ENCODE measurements at regions of chr14 and their contacts with region 1.

Region 1: DNA sequence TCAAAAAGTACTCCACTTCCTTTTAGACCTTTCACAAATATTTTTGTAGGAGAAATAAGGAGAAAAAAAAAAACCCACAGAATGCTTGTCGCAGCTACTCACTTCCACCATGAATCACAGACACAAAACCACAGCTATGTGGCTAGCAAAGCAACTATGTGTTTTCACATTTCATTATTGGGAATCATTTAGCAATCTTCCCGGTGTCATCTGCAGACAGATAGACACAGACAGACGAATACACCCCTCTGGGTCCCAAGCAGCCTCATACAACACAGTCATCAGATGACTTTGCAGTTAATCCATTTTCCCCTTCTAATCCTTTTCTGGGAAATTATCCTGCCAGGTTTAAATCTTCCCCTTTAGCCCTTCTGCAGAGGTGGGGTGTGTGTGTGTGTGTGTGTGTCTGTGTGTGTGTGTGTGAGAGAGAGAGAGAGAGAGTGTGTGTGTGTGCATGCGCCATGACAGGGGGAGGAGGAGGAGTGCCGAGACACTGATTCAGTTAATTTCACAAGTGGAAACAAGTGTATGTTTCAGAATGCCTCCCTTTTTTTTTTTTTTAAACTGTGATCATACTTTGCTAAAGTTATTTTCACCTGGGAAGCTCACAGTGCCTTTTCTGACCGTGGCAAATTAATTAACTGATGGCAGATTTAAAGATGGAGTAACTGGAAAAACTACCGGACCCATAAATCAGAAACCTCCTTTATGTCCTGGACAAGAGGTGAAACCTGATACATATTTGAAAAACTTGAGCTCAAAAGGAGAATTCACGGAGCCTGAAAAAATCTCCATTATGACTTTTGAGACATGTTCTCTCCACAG is 39.9 kb downstream of the LTBP2 start:
- DNase-seq: no peak
- H3K4me3 ChIP-seq: no peak overlapping the region
- H3K27ac ChIP-seq: no peak overlapping the region
- H3K4me1 ChIP-seq: peaks cover 0 to 7% (median 5%) of the 10 kb centered on the region in 4 experiments; a peak in 5 of 7 replicates
- H3K27me3 ChIP-seq: no peaks in the 10 kb centered on the region
- CTCF ChIP-seq: no peak
- EP300 ChIP-seq: no peak
- POLR2A ChIP-seq: no peak
- RAD21 ChIP-seq: no peak

Region 2: GRCh38 chr14:74380156-74380555 is 192.0 kb before region 1 on chr14:
- CTCF ChIA-PET with region 1: no interaction called
- POLR2A ChIA-PET with region 1: no interaction called
- DNase-seq: no peak
- H3K4me3 ChIP-seq: no peak overlapping the region
- H3K27ac ChIP-seq: no peak overlapping the region
- H3K4me1 ChIP-seq: no peaks in the 10 kb centered on the region
- H3K27me3 ChIP-seq: no peaks in the 10 kb centered on the region
- CTCF ChIP-seq: no peak
- EP300 ChIP-seq: no peak
- POLR2A ChIP-seq: no peak
- RAD21 ChIP-seq: no peak

Region 3: DNA sequence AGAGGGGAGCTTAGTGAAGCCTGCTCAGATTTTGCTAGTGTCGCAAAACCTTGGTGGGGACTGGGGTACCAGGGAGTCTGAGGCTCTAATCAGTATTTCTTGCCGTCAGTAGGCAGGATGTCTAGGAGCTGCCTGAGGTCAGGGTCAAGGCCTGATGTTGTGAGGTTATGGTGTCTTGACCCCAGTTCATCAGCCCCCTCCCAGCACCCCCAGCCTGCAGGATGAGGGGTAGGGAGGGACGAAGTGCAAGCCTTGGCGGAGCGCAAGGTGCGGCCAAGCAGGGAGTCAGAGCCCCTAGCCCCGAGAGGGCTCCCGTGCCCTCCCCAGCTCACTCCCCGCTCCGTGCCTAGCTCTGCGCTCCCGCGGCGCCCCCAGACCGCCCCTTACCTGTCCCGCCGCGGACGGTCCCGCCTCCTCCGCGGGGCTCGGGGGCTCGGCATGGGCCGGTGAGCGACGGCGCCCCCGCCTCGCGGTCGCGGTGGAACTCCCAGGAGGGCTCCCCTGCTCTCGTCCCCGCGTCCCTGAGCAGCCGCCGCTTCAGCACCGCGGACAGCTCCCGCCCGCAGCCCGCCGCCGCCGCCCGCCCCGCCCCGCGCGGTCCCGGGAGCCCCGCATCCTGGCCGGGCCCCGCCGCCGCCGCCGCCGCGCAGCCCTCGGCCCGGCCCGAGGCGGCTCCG is 146.4 kb before region 1 on chr14:
- CTCF ChIA-PET with region 1: no interaction called
- POLR2A ChIA-PET with region 1: no interaction called
- DNase-seq: peak in 1 of 2 experiments; percentile 94
- H3K4me3 ChIP-seq: peak overlapping the region; percentile 34 to 60 (median 51)
- H3K27ac ChIP-seq: no peak overlapping the region
- H3K4me1 ChIP-seq: peaks cover 27 to 39% (median 30%) of the 10 kb centered on the region in 4 experiments
- H3K27me3 ChIP-seq: peaks cover 0 to 12% (median 7%) of the 10 kb centered on the region in 4 experiments; a peak in 4 of 7 replicates
- CTCF ChIP-seq: no peak
- EP300 ChIP-seq: peak in 1 of 2 experiments; percentile 70; a peak in 1 of 3 replicates
- POLR2A ChIP-seq: no peak
- RAD21 ChIP-seq: no peak

Region 4: DNA sequence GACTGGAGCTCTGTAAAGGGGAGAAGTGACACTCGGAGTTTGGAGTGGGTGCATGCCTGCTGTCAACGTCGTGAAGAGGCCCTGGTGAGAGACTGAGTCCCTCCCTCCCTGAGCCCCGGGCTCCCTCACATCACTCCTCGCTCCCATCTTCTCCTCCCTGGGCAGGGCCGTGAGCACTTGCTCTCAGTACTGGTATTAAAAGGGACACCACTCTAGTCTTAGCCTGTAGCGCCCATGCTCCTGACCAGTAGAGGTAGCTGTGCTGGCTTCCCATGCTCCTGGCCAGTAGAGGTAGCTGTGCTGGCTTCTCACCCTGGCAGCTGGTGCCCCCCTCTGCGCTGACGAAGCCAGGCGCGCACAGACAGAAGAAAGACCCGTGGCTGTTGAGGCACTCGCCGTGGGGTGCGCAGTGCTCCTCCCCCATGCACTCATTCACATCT is 63.8 kb before region 1 on chr14:
- CTCF ChIA-PET with region 1: interaction called, 27 read pairs
- POLR2A ChIA-PET with region 1: no interaction called
- DNase-seq: no peak
- H3K4me3 ChIP-seq: no peak overlapping the region
- H3K27ac ChIP-seq: no peak overlapping the region
- H3K4me1 ChIP-seq: peaks cover 0 to 19% (median 11%) of the 10 kb centered on the region in 4 experiments; a peak in 5 of 7 replicates
- H3K27me3 ChIP-seq: no peaks in the 10 kb centered on the region; a peak in 1 of 7 replicates
- CTCF ChIP-seq: peak in 2 of 3 experiments; percentile 99 to 100; a peak in 3 of 4 replicates
- EP300 ChIP-seq: no peak
- POLR2A ChIP-seq: no peak
- RAD21 ChIP-seq: peak; percentile 60 to 74

Region 5: DNA sequence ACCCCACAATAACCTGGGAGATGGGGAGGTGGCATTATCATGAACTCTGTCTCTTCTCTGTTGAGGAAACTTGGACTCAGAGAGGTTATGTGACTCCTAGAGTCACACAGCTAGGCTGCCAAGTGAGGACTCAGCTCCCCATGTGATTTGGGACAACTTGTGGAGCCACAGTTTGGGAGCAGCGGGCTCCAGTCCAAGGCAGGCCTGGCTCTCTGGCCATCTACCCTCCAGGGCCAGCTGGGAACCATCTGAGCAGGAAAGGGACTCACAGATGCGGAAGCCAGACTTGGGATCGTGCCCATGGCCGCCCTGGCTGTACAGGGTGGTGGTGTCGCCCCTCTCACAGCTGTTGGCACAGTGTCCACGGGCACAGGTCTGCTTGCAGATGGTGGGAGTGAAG is 19.5 kb before region 1 on chr14:
- CTCF ChIA-PET with region 1: interaction called, 11 read pairs
- POLR2A ChIA-PET with region 1: no interaction called
- DNase-seq: no peak
- H3K4me3 ChIP-seq: no peak overlapping the region
- H3K27ac ChIP-seq: no peak overlapping the region
- H3K4me1 ChIP-seq: peaks cover 0 to 13% (median 6%) of the 10 kb centered on the region in 4 experiments; a peak in 6 of 7 replicates
- H3K27me3 ChIP-seq: no peaks in the 10 kb centered on the region
- CTCF ChIP-seq: no peak
- EP300 ChIP-seq: no peak
- POLR2A ChIP-seq: no peak
- RAD21 ChIP-seq: no peak

Region 6: DNA sequence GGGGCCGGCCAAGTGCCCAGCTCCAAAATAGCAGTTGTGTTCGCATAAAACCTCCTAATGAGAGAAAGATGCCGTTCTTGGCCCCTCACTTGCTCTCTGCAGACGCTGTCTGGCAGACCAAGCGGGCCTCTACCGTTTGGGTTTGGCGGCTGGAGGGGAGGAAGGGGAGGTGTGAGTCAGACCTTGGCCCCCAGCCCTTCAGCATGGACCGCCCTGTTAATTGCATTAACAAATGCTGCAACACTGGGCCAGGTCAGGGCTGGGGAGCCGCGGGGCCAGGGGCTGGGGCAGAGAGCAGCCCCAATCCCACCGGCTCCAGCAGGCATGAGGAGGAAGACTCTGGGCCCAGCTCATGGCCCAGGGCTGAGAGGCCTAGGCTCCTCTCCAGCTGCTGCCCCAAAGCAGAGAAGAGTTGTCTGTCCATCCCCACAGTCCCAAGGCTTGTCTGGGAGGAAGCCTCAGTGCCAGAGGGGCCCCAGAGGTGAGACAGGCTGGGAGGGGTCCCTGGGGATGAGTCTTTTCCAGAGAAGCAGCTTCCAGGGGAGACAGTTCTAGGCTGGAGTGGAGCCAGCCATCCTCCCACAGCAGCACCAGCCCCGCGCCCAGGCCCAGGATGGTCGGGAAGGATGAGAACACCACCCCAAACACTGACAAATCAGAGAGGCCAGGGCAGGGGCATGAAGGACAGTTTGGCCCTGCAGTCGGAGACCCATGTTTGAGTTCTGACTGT is 23.1 kb after region 1 on chr14:
- CTCF ChIA-PET with region 1: interaction called, 51 read pairs
- POLR2A ChIA-PET with region 1: interaction called, 5 read pairs
- DNase-seq: no peak
- H3K4me3 ChIP-seq: no peak overlapping the region
- H3K27ac ChIP-seq: no peak overlapping the region
- H3K4me1 ChIP-seq: no peaks in the 10 kb centered on the region; a peak in 1 of 7 replicates
- H3K27me3 ChIP-seq: no peaks in the 10 kb centered on the region
- CTCF ChIP-seq: no peak
- EP300 ChIP-seq: no peak
- POLR2A ChIP-seq: no peak
- RAD21 ChIP-seq: no peak